ENCODE measurements at regions of chr2 and their contacts with region 1.

Region 1: DNA sequence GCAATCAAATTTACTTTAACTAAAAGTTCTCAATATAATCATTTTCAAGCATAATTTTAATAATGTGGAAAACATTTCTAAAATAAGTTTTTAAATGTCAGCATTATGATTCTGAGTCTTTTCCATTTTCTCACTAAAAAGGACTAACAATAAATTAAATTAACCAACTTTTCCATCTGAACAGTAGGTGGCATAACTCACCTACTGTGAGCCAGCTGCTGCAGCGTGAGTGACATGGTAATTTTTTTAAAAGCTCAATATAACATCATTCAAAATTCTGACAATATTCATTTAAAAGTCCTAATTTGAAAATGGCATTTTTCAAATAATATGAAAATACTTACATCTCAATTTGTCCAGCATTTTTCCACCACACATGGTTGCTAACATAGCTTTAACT is 66.5 kb downstream of the DTNB start:
- DNase-seq: no peak
- ATAC-seq: no peak
- H3K4me3 ChIP-seq: no peak overlapping the region
- H3K27ac ChIP-seq: no peak overlapping the region
- H3K4me1 ChIP-seq: no peaks in the 10 kb centered on the region
- H3K27me3 ChIP-seq: no peaks in the 10 kb centered on the region
- CTCF ChIP-seq: peak in 3 of 5 experiments; percentile 40 to 57 (median 51)
- POLR2A ChIP-seq: no peak

Region 2: DNA sequence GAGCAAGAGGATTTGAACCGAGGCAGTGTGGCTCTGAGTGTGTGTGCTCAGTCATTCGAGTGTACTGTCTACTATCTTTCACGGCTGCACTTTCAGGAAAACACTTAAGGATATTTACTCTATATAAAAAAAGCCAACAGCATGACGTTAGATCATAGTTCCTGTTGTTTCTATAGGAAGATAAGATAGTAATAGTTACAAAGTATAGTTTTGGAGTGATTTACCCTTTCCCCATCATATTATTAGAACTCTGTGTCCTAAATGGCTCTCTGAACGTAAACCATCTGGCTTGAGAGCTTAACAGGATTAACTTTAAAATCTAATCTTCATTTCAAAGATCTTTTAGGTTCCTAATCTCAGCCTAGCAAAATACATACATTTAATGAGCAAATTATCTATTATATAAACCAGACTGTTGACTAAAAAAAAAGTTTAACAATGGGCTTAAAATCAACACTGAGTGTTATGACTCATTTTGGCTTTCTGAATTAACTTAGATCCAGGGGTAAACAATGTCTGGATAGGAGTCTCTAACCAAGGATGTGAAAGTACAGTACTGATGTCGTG is 114.8 kb before region 1 on chr2:
- in situ Hi-C with region 1: no loop called
- intact Hi-C with region 1: no loop called
- DNase-seq: no peak
- ATAC-seq: no peak
- H3K4me3 ChIP-seq: no peak overlapping the region
- H3K27ac ChIP-seq: peak overlapping the region in 1 of 4 donors; percentile 40
- H3K4me1 ChIP-seq: peaks cover 0 to 9% of the 10 kb centered on the region in 2 donors
- H3K27me3 ChIP-seq: no peaks in the 10 kb centered on the region
- CTCF ChIP-seq: no peak
- POLR2A ChIP-seq: no peak

Region 3: DNA sequence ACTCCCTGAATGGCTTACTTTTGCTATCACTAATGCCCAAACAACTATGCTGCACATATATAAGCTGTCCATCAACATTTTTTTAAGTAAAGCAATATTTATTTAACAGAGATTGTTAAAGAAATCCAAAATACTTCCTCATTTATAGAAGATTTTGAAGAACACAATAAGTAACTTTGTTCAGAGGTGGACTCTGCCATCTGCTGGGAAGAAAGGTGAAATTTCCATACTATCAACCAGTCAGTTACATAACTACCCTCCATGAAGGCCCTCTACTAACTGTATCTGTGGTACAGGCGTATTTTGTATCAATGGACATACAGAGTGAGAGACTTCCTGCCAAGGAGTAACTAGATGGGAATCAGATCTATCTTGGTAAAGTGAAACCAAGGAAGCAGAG is 39.5 kb before region 1 on chr2:
- in situ Hi-C with region 1: no loop called
- intact Hi-C with region 1: no loop called
- DNase-seq: no peak
- ATAC-seq: no peak
- H3K4me3 ChIP-seq: no peak overlapping the region
- H3K27ac ChIP-seq: no peak overlapping the region
- H3K4me1 ChIP-seq: no peaks in the 10 kb centered on the region
- H3K27me3 ChIP-seq: no peaks in the 10 kb centered on the region
- CTCF ChIP-seq: peak in 1 of 5 experiments; percentile 15
- POLR2A ChIP-seq: no peak

Region 4: GRCh38 chr2:25664183-25664964 is 57.5 kb after region 1 on chr2:
- in situ Hi-C with region 1: no loop called
- intact Hi-C with region 1: loop called (anchors 2 kb)
- DNase-seq: peak in 1 of 2 donors; percentile 20
- ATAC-seq: peak in 1 of 2 donors; percentile 78
- H3K4me3 ChIP-seq: peak overlapping the region in 1 of 4 donors; percentile 21
- H3K27ac ChIP-seq: no peak overlapping the region
- H3K4me1 ChIP-seq: no peaks in the 10 kb centered on the region
- H3K27me3 ChIP-seq: no peaks in the 10 kb centered on the region
- CTCF ChIP-seq: peak in 3 of 5 experiments; percentile 36 to 55 (median 44)
- POLR2A ChIP-seq: no peak

Region 5: GRCh38 chr2:25700221-25700660 is 93.3 kb after region 1 on chr2:
- in situ Hi-C with region 1: no loop called
- intact Hi-C with region 1: loop called (anchors 1 kb)
- DNase-seq: no peak
- ATAC-seq: no peak
- H3K4me3 ChIP-seq: no peak overlapping the region
- H3K27ac ChIP-seq: no peak overlapping the region
- H3K4me1 ChIP-seq: no peaks in the 10 kb centered on the region
- H3K27me3 ChIP-seq: peaks cover 0 to 3% (median 0%) of the 10 kb centered on the region in 3 donors
- CTCF ChIP-seq: peak; percentile 29 to 59 (median 52)
- POLR2A ChIP-seq: no peak